Activated CD4-positive, alpha-beta T cell treated with anti-CD3 and anti-CD28 coated beads for 36 hours (primary cell): ENCODE measurements at regions of chr4 and their contacts with region 1.

Region 1: DNA sequence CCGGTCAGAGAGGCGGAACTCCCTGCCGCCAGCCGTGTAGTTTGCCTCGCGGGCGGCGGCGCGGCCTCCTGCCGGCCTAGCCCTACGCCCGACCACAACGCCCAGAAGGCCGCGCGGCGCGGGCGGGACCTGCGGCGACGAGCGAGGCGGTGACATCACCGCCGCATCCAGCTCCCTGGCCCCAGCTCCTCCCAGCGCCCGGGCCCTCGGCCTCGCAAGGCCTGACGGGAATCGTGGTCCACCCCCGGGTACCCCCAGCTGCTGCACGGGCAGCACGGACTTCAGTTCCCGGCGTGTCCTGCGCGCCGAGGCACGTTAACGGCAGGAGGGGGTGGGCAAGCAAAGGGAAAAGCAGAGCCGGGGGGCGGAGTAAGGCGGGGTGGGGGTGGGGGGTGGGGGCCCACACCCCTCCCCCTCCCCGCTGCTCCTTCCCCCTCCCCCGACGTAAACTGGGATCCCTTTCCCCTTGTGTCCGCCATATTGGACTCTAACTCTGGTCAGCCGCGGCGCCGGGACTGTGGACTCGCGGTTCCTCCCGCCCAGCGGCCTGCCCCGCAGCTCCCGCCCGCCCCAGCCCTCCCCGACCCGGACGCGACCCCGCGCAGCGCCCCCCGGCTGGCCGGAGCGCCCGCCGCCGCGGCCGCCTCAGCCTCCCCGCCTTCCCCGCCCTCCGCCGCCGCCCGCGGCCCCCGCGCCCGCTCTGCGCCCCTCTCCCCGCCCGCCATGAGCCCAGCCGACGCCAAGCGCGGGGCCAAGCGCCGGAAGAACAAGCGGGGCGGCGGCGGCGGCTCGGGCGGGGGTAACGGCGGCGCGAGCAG is at the start of gene FAM193A:
- DNase-seq: peak; percentile 100
- ATAC-seq: peak; percentile 97
- H3K4me3 Mint-ChIP-seq: peak within 1 kb of the TSS; percentile 87
- H3K27ac Mint-ChIP-seq: peak within 1 kb of the TSS; percentile 88
- H3K4me1 Mint-ChIP-seq: peaks cover 24% of the 10 kb centered on the region
- H3K27me3 Mint-ChIP-seq: no peaks in the 10 kb centered on the region
- total RNA-seq, gene FAM193A: 22.1 to 30.1 TPM

Region 2: DNA sequence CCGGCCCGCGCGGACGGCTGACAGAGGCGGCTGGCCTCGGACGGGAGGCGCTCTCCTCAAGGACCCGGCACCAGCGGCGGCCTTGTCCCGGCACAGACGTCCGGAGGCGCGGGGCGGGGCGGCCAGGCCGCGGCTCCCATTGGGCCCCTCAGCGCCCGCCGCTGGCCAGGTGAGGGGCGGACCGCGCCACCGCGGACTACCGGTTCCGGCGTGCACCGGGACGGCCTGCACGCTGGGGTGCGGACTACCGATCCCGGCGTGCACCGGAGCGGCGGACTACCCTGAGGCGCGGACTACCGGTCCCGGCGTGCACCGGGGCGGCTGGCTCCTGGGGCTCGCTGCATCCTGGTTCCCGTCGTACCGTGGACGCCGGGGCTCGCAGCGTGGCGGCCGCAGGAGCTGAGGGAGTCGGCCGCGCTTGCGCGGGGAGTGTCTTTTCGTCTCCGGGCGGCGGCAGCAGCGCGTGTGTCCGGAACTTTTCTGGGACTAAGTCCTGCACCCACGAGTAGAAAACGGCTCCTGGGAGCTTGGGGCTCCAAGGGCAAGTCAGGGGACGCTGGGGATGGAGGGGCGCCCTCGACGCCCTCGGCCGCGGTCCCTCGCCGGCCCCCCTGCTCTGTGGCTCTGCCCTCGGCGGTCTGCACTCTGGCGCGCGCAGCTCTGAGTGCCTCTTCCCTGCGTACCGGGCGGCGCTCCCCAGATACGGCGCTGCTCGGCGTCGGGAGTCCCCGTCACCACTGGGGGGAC is 680.2 kb before region 1 on chr4 and contains the start of gene LETM1:
- CTCF ChIA-PET with region 1: no interaction called
- POLR2A ChIA-PET with region 1: no interaction called
- intact Hi-C with region 1: loop called in 1 of 2 experiments (anchors 1 kb)
- DNase-seq: peak; percentile 97
- ATAC-seq: peak; percentile 99
- H3K4me3 Mint-ChIP-seq: peak within 1 kb of the TSS; percentile 78
- H3K27ac Mint-ChIP-seq: peak within 1 kb of the TSS; percentile 55
- H3K4me1 Mint-ChIP-seq: peaks cover 40% of the 10 kb centered on the region
- H3K27me3 Mint-ChIP-seq: no peaks in the 10 kb centered on the region
- total RNA-seq, gene LETM1: 41.6 to 51.3 TPM

Region 3: GRCh38 chr4:2241410-2242353 is 294.7 kb before region 1 on chr4 and contains the starts of genes HAUS3 and POLN:
- CTCF ChIA-PET with region 1: no interaction called
- POLR2A ChIA-PET with region 1: no interaction called
- intact Hi-C with region 1: loop called (anchors 1 to 2 kb)
- DNase-seq: peak; percentile 99
- ATAC-seq: peak; percentile 97
- H3K4me3 Mint-ChIP-seq: peak within 1 kb of the TSS; percentile 91
- H3K27ac Mint-ChIP-seq: peak within 1 kb of the TSS; percentile 88
- H3K4me1 Mint-ChIP-seq: peaks cover 54% of the 10 kb centered on the region
- H3K27me3 Mint-ChIP-seq: no peaks in the 10 kb centered on the region
- total RNA-seq, gene HAUS3: 14.6 to 18.6 TPM
- total RNA-seq, gene POLN: 2.3 to 3.2 TPM

Region 4: DNA sequence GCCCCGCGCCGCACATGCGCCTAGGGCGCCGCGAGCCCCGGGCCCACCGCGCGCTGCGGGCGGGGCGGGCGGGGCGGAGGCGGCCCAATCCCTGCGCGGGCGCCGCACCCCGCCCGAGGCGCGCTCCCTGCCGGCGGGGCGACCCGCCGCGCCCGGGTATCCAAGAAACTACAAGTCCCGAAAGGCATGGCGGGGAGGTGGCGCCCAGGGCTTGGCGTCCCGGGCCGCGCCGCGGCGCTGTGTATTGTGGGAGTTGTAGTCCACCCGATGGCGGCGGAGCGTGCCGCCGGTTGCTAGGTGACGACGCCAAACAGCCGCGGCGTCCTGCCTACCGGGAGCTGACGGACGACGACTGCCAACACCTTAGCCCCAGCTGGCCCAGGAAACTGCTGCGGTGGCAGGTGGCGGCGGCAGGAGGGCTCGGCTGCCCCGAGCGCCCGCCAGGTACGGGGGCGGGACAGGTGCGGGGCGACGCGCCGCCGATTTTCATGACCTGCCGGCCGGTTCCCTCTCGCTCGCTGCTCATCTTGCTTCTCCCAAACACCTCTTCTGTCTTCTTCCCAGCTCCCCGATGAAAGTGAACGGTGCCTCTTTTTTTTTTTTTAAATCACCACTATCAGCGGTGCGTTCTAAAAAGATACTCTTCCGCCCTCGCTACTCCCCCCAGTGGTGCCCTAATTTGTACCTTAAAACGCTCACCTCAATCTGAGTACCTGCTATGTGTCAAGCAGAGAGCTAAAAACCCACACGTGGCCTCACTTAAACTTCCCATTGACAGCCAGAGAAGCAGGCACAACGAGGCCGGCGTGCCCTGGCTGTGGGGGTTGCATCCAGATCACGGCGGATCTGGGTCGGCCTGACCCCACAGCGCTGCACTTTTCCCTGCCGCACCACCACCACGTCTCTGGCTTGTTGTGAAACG is 117.5 kb before region 1 on chr4 and contains the start of gene CFAP99:
- CTCF ChIA-PET with region 1: no interaction called
- POLR2A ChIA-PET with region 1: no interaction called
- intact Hi-C with region 1: loop called (anchors 1 to 5 kb)
- DNase-seq: peak; percentile 99
- ATAC-seq: peak; percentile 93
- H3K4me3 Mint-ChIP-seq: peak within 1 kb of the TSS; percentile 82
- H3K27ac Mint-ChIP-seq: peak within 1 kb of the TSS; percentile 68
- H3K4me1 Mint-ChIP-seq: peaks cover 39% of the 10 kb centered on the region
- H3K27me3 Mint-ChIP-seq: peaks cover 27% of the 10 kb centered on the region
- total RNA-seq, gene CFAP99: 0.05 TPM in 1 of 2 experiments, not detected in the other

Region 5: DNA sequence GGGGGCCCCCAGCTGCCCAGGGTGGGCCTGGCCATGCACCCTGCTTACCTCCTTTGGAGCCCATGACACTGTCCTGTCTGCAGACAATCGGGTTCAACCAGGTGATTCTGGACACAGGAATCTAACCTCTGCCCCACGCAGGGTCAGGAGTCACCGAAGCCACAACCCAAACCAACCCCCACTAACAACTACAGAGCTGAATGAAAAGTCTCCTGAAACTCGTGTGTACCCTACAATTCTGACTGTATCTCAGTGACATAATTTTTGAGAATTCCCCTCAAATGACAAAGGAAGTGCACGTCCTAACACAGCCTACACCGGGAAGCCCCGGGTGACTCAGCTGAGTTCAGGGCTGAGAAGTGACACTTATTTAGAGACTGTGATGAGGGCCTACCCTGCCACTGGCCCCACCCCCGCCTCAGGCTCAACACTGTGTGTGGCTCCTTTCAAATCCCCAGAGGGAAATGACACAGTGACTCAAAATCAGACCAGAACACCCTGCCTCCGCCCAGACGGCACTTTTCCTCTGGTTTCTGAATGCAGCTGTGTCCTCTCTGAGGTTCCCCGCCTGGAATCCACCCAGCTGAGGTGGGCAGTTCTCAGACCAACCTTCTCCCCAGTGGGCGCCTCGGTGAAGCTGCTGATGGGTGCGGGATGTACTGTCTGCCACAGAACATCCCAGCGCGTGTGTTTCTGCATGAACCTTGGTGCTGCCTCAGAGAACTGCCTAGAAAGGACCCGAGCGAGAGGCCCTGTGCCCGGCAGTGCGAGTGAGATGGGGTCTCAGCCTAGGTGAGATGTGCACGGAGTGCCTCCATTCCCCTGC is 209.8 kb after region 1 on chr4:
- CTCF ChIA-PET with region 1: no interaction called
- POLR2A ChIA-PET with region 1: no interaction called
- intact Hi-C with region 1: loop called in 1 of 2 experiments (anchors 1 kb)
- DNase-seq: peak; percentile 98
- ATAC-seq: peak; percentile 97
- H3K4me3 Mint-ChIP-seq: peak overlapping the region; percentile 62
- H3K27ac Mint-ChIP-seq: peak overlapping the region; percentile 97
- H3K4me1 Mint-ChIP-seq: peaks cover 58% of the 10 kb centered on the region
- H3K27me3 Mint-ChIP-seq: no peaks in the 10 kb centered on the region

Region 6: GRCh38 chr4:2843263-2843940 is 307.0 kb after region 1 on chr4 and contains the start of gene ADD1:
- CTCF ChIA-PET with region 1: no interaction called
- POLR2A ChIA-PET with region 1: no interaction called
- intact Hi-C with region 1: loop called in 1 of 2 experiments (anchors 2 kb)
- DNase-seq: peak; percentile 94
- ATAC-seq: peak; percentile 88
- H3K4me3 Mint-ChIP-seq: peak within 1 kb of the TSS; percentile 88
- H3K27ac Mint-ChIP-seq: peak within 1 kb of the TSS; percentile 89
- H3K4me1 Mint-ChIP-seq: peaks cover 56% of the 10 kb centered on the region
- H3K27me3 Mint-ChIP-seq: no peaks in the 10 kb centered on the region
- total RNA-seq, gene ADD1: 196 to 206 TPM

Region 7: DNA sequence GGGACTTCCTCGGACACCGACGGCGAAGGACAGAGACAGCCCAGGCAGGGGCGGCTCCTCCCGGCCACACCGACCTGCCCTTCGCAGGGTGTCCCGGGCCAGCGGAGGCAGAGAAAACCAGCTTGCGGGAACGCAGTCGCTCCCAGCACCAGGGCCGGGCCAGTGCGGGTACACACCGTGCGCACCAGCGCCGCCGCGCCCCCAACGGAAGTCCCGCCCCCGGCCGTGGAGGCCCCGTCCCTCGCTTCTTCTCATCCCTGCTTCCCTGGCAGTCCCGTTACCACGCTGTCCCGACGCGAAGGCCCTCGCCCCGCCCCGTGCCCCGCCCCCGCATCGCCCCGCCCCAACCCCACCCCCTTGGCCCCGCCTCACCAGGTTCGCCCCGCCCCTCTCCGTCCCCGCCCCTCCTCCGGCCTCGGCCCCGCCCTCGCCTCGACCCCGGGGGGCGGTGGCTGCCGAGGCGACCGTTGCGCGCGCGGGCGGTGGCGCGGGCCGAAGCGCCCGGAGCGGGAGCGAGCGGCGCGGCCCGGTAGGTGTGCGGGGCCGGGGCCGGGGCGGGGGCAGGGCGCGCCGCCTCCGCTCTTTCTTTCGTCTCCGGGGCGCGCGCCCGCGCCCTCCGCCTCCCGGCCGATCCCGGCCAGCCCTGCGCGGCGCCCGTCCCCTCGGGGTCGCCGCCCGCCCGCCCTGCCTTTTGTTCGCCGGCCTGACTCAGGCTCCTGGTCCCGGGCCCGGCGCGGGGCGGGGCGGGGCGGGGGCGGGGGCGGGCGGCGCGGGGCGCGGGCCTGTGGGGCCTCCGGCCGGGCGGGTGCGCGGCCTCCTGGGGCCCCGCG is 756.4 kb after region 1 on chr4 and contains the start of gene RGS12:
- CTCF ChIA-PET with region 1: no interaction called
- POLR2A ChIA-PET with region 1: no interaction called
- intact Hi-C with region 1: loop called in 1 of 2 experiments (anchors 5 kb)
- DNase-seq: peak; percentile 93
- ATAC-seq: peak; percentile 95
- H3K4me3 Mint-ChIP-seq: peak within 1 kb of the TSS; percentile 81
- H3K27ac Mint-ChIP-seq: peak within 1 kb of the TSS; percentile 64
- H3K4me1 Mint-ChIP-seq: peaks cover 11% of the 10 kb centered on the region
- H3K27me3 Mint-ChIP-seq: peaks cover 4% of the 10 kb centered on the region
- total RNA-seq, gene RGS12: 8.0 to 9.4 TPM